AG04450 (cell line): ENCODE measurements at regions of chr1 and their contacts with region 1.

Region 1: DNA sequence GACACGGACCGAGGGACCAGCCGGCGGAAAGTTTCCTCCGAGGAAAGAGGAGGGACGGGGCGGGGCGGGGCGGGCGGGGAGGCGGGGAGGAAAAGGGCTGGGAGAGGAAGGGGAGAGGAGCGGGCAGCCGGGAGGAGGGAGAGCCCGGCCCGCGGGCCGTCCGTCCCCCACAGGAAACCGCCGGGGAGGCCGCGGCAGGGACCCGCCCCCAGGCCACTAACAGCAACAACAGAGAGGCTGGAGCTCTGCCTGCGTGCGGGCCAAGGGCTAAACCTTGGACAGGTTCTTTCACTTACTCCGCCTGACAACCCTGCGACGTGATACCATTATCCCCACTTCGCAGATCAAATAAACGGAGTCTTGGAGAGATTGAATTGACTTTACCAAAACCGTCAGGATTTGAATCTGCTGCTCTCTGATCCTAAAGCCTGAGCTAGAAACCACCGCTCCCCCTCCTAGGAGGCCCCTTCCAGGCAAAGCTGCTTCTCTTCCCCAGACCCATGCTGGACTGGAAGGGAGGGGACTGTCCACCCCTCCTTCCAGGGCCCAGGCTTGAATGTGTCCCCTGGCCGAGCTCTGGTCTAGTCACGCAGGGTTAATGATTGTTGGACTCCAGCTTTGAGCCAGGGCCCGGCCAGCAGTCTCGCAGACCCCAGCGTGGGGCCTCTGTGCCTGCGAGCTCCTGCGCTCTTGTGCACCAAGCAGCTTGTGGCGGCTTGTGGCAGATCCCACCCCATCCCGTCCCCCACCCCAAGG is at the start of gene EVA1B:
- DNase-seq: no peak
- H3K4me3 ChIP-seq: peak within 1 kb of the TSS; percentile 79
- H3K27ac ChIP-seq: peak within 1 kb of the TSS; percentile 83
- H3K27me3 ChIP-seq: no peaks in the 10 kb centered on the region
- CTCF ChIP-seq: no peak
- polyA plus RNA-seq, gene EVA1B: 27.2 and 42.6 TPM in 2 replicates

Region 2: DNA sequence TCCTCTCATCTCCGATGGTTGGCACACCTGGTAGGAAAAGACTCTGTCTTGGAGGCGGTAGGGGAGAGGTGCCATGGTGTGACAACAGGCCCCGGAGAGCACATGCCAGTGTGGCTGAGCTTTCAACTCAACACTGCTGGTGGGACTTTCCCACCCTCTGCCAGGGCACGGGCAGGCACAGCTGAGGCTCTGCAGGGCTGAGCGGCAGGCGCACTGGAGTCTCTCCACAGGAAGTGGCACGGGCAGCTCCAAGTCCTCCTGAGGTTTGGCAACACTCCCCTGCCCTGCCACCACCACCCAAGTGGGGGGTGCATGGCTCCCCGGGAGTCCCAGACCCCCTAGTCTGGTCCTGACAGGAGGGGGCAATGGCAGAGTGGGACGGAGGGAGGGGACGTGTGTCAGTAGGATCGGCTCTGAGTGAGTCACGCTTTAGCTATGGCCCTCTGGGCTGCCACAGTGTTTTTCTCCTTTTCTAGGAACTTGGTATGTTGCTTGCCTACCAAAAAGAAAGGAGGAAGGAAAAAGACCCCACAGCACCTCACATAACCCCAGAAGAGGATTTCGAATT is 27.0 kb after region 1 on chr1:
- CTCF ChIA-PET with region 1: interaction called, 3 read pairs
- POLR2A ChIA-PET with region 1: interaction called, 13 read pairs
- DNase-seq: no peak
- H3K4me3 ChIP-seq: no peak overlapping the region
- H3K27ac ChIP-seq: peak overlapping the region; percentile 98
- H3K27me3 ChIP-seq: no peaks in the 10 kb centered on the region
- CTCF ChIP-seq: no peak

Region 3: GRCh38 chr1:36401602-36402503 is 78.1 kb after region 1 on chr1:
- CTCF ChIA-PET with region 1: no interaction called
- POLR2A ChIA-PET with region 1: no interaction called
- DNase-seq: no peak
- H3K4me3 ChIP-seq: no peak overlapping the region
- H3K27ac ChIP-seq: no peak overlapping the region
- H3K27me3 ChIP-seq: no peaks in the 10 kb centered on the region
- CTCF ChIP-seq: no peak